PC-3 (cell line): ENCODE measurements at regions of chr4 and their contacts with region 1.

Region 1: DNA sequence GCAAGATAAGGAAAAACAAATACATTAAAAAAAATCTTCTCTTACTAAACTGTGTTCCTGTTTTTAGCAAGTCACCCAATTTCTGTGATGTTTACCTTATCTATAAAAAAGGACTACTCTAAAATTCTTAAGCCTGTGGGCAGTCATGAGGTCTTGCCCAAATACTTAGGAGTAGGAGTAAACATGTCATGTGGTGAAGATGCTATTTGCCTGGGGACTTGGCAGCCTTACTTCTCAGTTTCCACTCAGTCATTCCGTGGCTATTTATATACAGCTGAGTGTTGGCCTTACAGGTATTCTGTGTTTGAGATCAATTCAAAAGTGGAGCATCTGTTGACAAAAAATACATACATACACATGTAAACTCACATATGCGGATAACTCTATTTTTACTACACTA is 89.9 kb upstream of the TLR2 start:
- DNase-seq: peak; percentile 31
- ATAC-seq: peak; percentile 71
- H3K4me3 ChIP-seq: no peak overlapping the region
- H3K27ac ChIP-seq: no peak overlapping the region
- H3K4me1 ChIP-seq: peaks cover 7% of the 10 kb centered on the region; the same call in 1 of the 2 replicates
- H3K27me3 ChIP-seq: no peaks in the 10 kb centered on the region
- CTCF ChIP-seq: no peak

Region 2: GRCh38 chr4:153610623-153611376 is 16.6 kb after region 1 on chr4:
- CTCF ChIA-PET with region 1: no interaction called
- POLR2A ChIA-PET with region 1: interaction called, 3 read pairs
- intact Hi-C with region 1: loop called (anchors 1 kb)
- DNase-seq: no peak
- ATAC-seq: peak; percentile 65
- H3K4me3 ChIP-seq: no peak overlapping the region
- H3K27ac ChIP-seq: no peak overlapping the region
- H3K4me1 ChIP-seq: peaks cover 9% of the 10 kb centered on the region; the same call in 1 of the 2 replicates
- H3K27me3 ChIP-seq: no peaks in the 10 kb centered on the region
- CTCF ChIP-seq: no peak

Region 3: GRCh38 chr4:153643406-153644383 is 49.5 kb after region 1 on chr4:
- CTCF ChIA-PET with region 1: no interaction called
- POLR2A ChIA-PET with region 1: no interaction called
- intact Hi-C with region 1: loop called (anchors 5 kb)
- DNase-seq: peak; percentile 60
- ATAC-seq: peak; percentile 85
- H3K4me3 ChIP-seq: no peak overlapping the region
- H3K27ac ChIP-seq: no peak overlapping the region
- H3K4me1 ChIP-seq: no peaks in the 10 kb centered on the region
- H3K27me3 ChIP-seq: no peaks in the 10 kb centered on the region
- CTCF ChIP-seq: peak; percentile 64